Heart left ventricle (tissue), 16 donors: ENCODE measurements at regions of chr7 and their contacts with region 1.

Region 1: GRCh38 chr7:104983578-104984539 is 30.1 kb upstream of the KMT2E start:
- DNase-seq: peak; percentile 92 to 94 (median 93)
- ATAC-seq: peak; percentile 93 to 97 (median 95)
- H3K4me3 ChIP-seq: peak overlapping the region; percentile 55 to 73 (median 68)
- H3K27ac ChIP-seq: peak overlapping the region; percentile 90 to 99 (median 98)
- H3K4me1 ChIP-seq: peaks cover 0 to 88% (median 63%) of the 10 kb centered on the region in 12 donors
- H3K27me3 ChIP-seq: no peaks in the 10 kb centered on the region
- CTCF ChIP-seq: peak; percentile 28 to 84 (median 58)
- POLR2A ChIP-seq: peak in 1 of 2 donors; percentile 84

Region 2: GRCh38 chr7:104791080-104791479 is 192.8 kb before region 1 on chr7:
- intact Hi-C with region 1: no loop called
- DNase-seq: no peak
- ATAC-seq: no peak
- H3K4me3 ChIP-seq: no peak overlapping the region
- H3K27ac ChIP-seq: no peak overlapping the region
- H3K4me1 ChIP-seq: no peaks in the 10 kb centered on the region
- H3K27me3 ChIP-seq: peaks cover 0 to 10% (median 0%) of the 10 kb centered on the region in 9 donors
- CTCF ChIP-seq: no peak
- POLR2A ChIP-seq: no peak

Region 3: DNA sequence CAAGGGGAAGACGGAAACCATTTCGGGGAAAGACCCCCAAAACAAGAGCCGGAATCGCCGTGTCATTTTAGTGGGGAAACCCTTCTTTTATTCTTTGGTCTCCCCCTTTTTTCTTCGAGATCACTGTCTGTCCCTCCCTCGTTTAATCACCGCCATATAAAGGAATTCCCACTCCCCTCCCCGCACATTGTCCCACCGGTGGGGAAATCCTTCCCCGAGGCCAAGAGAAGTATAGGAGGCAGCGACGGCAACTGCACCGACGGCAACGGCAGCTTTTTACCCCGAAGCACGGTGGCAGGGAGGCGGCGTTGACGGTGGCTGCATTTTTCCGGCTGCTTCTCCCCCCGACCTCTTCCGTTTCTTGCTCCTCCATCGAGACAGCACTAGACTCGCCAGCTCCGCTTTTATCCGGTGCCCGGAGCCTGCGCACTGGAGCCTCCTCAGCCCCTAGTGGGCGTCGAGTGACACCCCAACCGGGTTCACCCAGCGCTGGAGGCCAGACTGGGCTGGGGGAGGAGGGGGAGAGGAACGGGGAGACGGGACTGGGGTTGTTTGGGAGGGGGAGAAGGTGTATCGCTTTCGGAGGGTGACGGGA is 29.5 kb after region 1 on chr7:
- intact Hi-C with region 1: loop called in 9 of 10 experiments (anchors 1 to 2 kb)
- DNase-seq: peak; percentile 95 to 98 (median 97)
- ATAC-seq: peak; percentile 82 to 88 (median 85)
- H3K4me3 ChIP-seq: peak overlapping the region; percentile 72 to 92 (median 82)
- H3K27ac ChIP-seq: peak overlapping the region; percentile 98 to 100 (median 100)
- H3K4me1 ChIP-seq: peaks cover 0 to 50% (median 33%) of the 10 kb centered on the region in 12 donors
- H3K27me3 ChIP-seq: no peaks in the 10 kb centered on the region
- CTCF ChIP-seq: peak; percentile 30 to 63 (median 50)
- POLR2A ChIP-seq: peak; percentile 68 to 74

Region 4: DNA sequence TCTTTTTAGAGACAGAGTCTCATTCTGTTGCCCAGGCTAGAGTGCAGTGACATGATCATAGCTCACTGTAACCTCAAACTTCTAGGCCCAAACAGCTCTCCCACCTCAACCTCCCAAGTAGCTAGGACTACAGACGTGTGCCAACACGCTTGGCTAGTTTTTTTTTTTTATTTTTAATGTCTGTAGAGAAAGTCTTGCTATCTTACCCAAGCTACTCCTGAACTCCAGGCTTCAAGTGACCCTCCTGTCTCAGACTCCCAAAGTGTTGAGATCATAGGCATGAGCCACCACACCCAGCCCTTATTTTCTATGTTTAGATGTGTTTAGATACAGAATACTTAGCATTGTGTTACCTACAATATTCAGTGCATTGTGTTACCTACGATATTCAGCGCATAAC is 76.6 kb after region 1 on chr7:
- intact Hi-C with region 1: loop called in 1 of 10 experiments (anchors 5 kb)
- DNase-seq: no peak
- ATAC-seq: peak in 3 of 4 donors; percentile 25 to 46 (median 35)
- H3K4me3 ChIP-seq: no peak overlapping the region
- H3K27ac ChIP-seq: peak overlapping the region in 2 of 12 donors; percentile 19 to 39
- H3K4me1 ChIP-seq: peaks cover 0 to 76% (median 52%) of the 10 kb centered on the region in 12 donors
- H3K27me3 ChIP-seq: no peaks in the 10 kb centered on the region
- CTCF ChIP-seq: no peak
- POLR2A ChIP-seq: no peak

Region 5: DNA sequence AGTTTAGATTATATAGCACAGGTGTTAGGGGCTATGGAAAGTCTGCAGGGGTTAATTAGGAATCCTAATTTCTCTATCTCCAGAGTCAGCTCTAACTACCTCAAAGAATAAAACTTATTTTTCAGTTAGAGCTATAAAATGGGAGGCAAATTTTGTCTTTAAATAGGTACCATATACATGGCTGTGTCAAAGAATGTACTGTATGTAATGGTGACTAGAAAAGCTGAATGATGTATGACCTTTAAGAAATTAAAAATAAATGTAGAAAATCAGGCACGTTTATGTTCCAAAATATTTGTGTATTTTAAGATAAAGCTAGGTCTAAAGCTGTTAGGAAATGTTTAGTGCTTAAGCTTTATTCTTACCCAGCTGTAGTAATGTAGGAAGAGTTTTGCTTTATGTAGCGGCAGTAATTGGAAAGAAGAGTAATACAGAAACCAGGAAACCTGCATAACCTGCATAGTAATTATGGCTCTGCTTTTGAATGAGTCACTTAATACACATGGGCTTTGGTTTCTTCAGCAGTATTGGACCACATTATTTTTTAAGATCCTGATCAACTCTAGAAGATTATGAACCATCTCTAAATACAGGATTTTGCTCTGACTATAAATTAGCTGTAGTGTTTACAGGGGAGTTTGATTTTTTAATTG is 115.1 kb after region 1 on chr7:
- intact Hi-C with region 1: loop called in 4 of 10 experiments (anchors 5 to 10 kb)
- DNase-seq: no peak
- ATAC-seq: no peak
- H3K4me3 ChIP-seq: no peak overlapping the region
- H3K27ac ChIP-seq: peak overlapping the region in 1 of 12 donors; percentile 21
- H3K4me1 ChIP-seq: peaks cover 0 to 29% (median 9%) of the 10 kb centered on the region in 12 donors
- H3K27me3 ChIP-seq: no peaks in the 10 kb centered on the region
- CTCF ChIP-seq: no peak
- POLR2A ChIP-seq: no peak

Region 6: GRCh38 chr7:105336009-105336408 is 352.1 kb after region 1 on chr7:
- intact Hi-C with region 1: loop called in 3 of 10 experiments (anchors 5 to 10 kb)
- DNase-seq: no peak
- ATAC-seq: no peak
- H3K4me3 ChIP-seq: no peak overlapping the region
- H3K27ac ChIP-seq: no peak overlapping the region
- H3K4me1 ChIP-seq: peaks cover 0 to 14% (median 5%) of the 10 kb centered on the region in 12 donors
- H3K27me3 ChIP-seq: no peaks in the 10 kb centered on the region
- CTCF ChIP-seq: peak; percentile 12 to 60 (median 47)
- POLR2A ChIP-seq: no peak